Naive thymus-derived CD4-positive, alpha-beta T cell (primary cell): ENCODE measurements at regions of chr5 and their contacts with region 1.

Region 1: GRCh38 chr5:40521925-40522324 is 157.8 kb upstream of the PTGER4 start:
- DNase-seq: no peak
- ATAC-seq: no peak
- H3K4me3 ChIP-seq: no peak overlapping the region
- H3K4me3 Mint-ChIP-seq: no peak overlapping the region
- H3K27ac ChIP-seq: no peak overlapping the region
- H3K27ac Mint-ChIP-seq: no peak overlapping the region
- H3K4me1 ChIP-seq: no peaks in the 10 kb centered on the region
- H3K4me1 Mint-ChIP-seq: peaks cover 2 to 19% (median 15%) of the 10 kb centered on the region in 7 donors
- H3K27me3 ChIP-seq: no peaks in the 10 kb centered on the region
- H3K27me3 Mint-ChIP-seq: no peaks in the 10 kb centered on the region

Region 2: DNA sequence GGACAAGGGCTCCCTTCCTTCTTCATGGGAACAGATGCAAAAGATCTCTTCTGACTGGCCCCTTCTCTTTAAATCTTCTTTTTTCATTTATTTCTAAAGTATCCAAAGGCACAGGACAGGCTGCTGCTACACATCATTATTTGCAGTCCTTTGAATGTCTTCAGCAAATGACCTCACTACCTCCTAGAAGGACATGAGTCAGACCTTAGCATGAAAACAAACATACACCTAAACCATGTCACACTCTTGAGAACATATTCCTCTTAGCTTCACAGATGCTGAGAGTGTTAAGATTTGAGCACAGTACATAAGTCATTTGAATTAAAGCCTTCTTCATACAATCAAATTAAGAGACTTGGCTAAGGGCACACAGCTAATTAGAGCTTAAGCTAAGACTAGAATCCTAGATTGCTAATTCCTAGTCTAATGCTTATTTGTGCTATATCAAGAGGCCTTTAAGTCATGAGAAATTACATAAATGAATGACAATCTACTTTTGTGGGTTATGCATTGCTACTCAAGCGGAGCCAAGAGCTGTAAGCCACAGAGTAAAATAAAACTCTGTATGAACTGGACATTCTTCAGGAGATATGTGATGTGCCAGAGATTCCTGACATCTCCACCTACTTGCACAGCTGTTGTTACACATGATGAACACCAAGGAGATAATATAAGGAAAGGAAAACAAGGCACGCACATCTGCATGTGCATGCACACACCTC is 48.6 kb after region 1 on chr5:
- CTCF ChIA-PET with region 1: interaction called, 3 read pairs
- POLR2A ChIA-PET with region 1: no interaction called
- intact Hi-C with region 1: loop called in 1 of 2 experiments (anchors 5 kb)
- DNase-seq: no peak
- ATAC-seq: peak; percentile 68
- H3K4me3 ChIP-seq: no peak overlapping the region
- H3K4me3 Mint-ChIP-seq: peak overlapping the region in 1 of 10 donors; percentile 7
- H3K27ac ChIP-seq: no peak overlapping the region
- H3K27ac Mint-ChIP-seq: peak overlapping the region in 1 of 9 donors; percentile 26
- H3K4me1 ChIP-seq: no peaks in the 10 kb centered on the region
- H3K4me1 Mint-ChIP-seq: peaks cover 0 to 22% (median 12%) of the 10 kb centered on the region in 7 donors
- H3K27me3 ChIP-seq: no peaks in the 10 kb centered on the region
- H3K27me3 Mint-ChIP-seq: peaks cover 0 to 4% (median 0%) of the 10 kb centered on the region in 5 donors